Heart right ventricle (tissue), 16 donors: ENCODE measurements at regions of chr10 and their contacts with region 1.

Region 1: DNA sequence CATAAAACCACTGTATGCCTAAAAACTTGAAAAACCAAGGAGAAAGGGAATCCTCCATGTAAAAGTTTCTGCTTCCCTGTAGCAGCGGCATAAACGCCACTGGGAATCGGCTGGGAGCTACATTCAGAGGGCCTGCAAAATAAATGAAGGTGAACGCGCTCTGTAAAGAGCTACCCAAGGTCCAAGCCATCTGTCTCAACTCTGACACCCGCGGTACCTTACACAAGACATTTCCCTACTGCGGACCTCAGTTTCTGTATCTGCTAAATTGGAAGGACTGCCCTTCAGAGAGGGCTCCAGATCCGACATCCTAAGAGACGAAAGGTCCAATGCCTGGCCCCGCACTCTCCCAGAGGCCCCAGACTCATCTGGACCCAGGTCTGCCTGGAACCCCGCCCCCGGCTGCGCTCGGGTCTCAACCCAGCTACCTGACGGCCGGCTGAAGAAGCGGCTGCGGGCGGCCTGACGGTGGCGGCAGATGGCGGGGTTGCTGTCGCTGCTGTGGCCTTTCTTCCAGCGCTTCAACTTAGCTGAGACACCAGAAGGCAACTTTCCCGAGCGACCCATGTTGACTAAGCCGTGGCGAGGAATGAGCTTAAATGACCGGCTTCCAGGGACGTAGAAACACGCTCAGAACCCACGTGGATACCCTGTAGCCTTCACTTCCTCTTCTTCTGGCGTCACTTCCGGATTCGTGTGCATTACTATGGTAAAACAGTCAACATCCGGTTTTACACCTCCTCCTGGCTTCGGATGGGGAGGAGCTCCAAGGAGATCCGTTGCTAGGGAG is at the start of gene RRP12:
- DNase-seq: peak; percentile 37 to 96
- ATAC-seq: peak; percentile 95 to 98 (median 97)
- H3K4me3 ChIP-seq: peak within 1 kb of the TSS; percentile 48 to 96 (median 80)
- H3K27ac ChIP-seq: peak within 1 kb of the TSS in 9 of 10 donors; percentile 56 to 91 (median 83)
- H3K4me1 ChIP-seq: peaks cover 0 to 30% (median 13%) of the 10 kb centered on the region in 9 donors
- H3K27me3 ChIP-seq: no peaks in the 10 kb centered on the region
- CTCF ChIP-seq: peak in 4 of 9 donors; percentile 8 to 36 (median 22)
- total RNA-seq, gene RRP12: 11.1 to 30.5 (median 20.8) TPM

Region 2: DNA sequence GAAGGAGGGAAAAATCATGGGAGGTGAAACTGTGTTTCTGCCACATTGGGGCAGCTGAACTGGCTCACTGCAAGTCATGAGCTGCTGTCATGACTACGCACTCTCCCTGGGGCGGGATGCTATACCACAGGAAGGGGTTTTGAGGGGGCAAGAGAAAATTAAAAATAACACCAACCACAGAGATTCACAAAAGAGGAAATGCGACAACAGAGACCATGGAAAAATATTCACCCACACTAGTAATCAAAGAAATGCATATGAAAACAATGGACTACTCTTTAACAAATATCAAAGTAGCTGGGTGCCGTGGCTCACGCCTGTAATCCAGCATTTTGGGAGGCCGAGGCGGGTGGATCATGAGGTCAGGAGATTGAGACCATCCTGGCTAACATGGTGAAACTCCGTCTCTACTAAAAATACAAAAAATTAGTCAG is 748.8 kb before region 1 on chr10:
- intact Hi-C with region 1: no loop called
- DNase-seq: peak in 1 of 2 donors; percentile 23
- ATAC-seq: peak in 5 of 8 donors; percentile 35 to 65 (median 58)
- H3K4me3 ChIP-seq: no peak overlapping the region
- H3K27ac ChIP-seq: peak overlapping the region in 1 of 10 donors; percentile 64
- H3K4me1 ChIP-seq: peaks cover 0 to 46% (median 0%) of the 10 kb centered on the region in 9 donors
- H3K27me3 ChIP-seq: peaks cover 0 to 4% (median 0%) of the 10 kb centered on the region in 7 donors
- CTCF ChIP-seq: no peak

Region 3: DNA sequence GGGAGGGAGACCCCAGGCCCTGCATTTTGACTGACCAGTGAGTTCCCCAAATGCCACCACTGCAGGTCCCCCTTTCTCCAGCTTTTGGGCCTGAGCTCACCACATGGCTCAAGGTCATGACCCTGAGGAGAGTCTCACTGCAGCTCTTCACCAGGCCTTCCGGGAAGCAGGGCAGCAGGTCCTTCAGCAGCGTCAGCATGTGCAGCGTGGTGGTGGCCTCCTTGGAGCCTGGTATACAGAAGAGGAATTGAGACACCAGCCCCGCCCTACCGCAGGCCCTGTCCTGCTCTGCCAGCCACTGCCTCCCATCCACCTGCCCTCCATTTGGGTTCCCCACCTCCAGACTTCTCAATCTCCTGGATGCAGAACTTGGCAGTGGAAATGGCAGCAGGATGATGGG is 12.7 kb before region 1 on chr10:
- intact Hi-C with region 1: no loop called
- DNase-seq: no peak
- ATAC-seq: peak in 2 of 8 donors; percentile 9 to 46
- H3K4me3 ChIP-seq: no peak overlapping the region
- H3K27ac ChIP-seq: no peak overlapping the region
- H3K4me1 ChIP-seq: peaks cover 0 to 11% (median 0%) of the 10 kb centered on the region in 9 donors
- H3K27me3 ChIP-seq: no peaks in the 10 kb centered on the region
- CTCF ChIP-seq: no peak

Region 4: GRCh38 chr10:97445722-97446639 is 45.1 kb after region 1 on chr10 and contains the starts of genes EXOSC1 and ZDHHC16:
- intact Hi-C with region 1: no loop called
- DNase-seq: peak; percentile 85 to 93
- ATAC-seq: peak; percentile 97 to 99 (median 98)
- H3K4me3 ChIP-seq: peak within 1 kb of the TSS; percentile 68 to 99 (median 96)
- H3K27ac ChIP-seq: peak within 1 kb of the TSS in 8 of 10 donors; percentile 59 to 88 (median 79)
- H3K4me1 ChIP-seq: peaks cover 12 to 51% (median 44%) of the 10 kb centered on the region in 9 donors
- H3K27me3 ChIP-seq: no peaks in the 10 kb centered on the region
- CTCF ChIP-seq: peak in 3 of 9 donors; percentile 16 to 42 (median 18)
- total RNA-seq, gene EXOSC1: 11.7 to 20.3 (median 15.1) TPM
- total RNA-seq, gene ZDHHC16: 13.4 to 27.3 (median 18.4) TPM

Region 5: GRCh38 chr10:97736902-97737769 is 336.3 kb after region 1 on chr10 and contains the start of gene ZFYVE27:
- intact Hi-C with region 1: loop called in 1 of 10 experiments (anchors 5 kb)
- DNase-seq: peak; percentile 96 to 98
- ATAC-seq: peak; percentile 97 to 99 (median 98)
- H3K4me3 ChIP-seq: peak within 1 kb of the TSS; percentile 65 to 99 (median 93)
- H3K27ac ChIP-seq: peak within 1 kb of the TSS; percentile 49 to 96 (median 94)
- H3K4me1 ChIP-seq: peaks cover 3 to 33% (median 18%) of the 10 kb centered on the region in 9 donors
- H3K27me3 ChIP-seq: no peaks in the 10 kb centered on the region
- CTCF ChIP-seq: no peak
- total RNA-seq, gene ZFYVE27: 7.5 to 16.0 (median 11.8) TPM